Endothelial cell of umbilical vein (primary cell): ENCODE measurements at regions of chr19 and their contacts with region 1.

Region 1: DNA sequence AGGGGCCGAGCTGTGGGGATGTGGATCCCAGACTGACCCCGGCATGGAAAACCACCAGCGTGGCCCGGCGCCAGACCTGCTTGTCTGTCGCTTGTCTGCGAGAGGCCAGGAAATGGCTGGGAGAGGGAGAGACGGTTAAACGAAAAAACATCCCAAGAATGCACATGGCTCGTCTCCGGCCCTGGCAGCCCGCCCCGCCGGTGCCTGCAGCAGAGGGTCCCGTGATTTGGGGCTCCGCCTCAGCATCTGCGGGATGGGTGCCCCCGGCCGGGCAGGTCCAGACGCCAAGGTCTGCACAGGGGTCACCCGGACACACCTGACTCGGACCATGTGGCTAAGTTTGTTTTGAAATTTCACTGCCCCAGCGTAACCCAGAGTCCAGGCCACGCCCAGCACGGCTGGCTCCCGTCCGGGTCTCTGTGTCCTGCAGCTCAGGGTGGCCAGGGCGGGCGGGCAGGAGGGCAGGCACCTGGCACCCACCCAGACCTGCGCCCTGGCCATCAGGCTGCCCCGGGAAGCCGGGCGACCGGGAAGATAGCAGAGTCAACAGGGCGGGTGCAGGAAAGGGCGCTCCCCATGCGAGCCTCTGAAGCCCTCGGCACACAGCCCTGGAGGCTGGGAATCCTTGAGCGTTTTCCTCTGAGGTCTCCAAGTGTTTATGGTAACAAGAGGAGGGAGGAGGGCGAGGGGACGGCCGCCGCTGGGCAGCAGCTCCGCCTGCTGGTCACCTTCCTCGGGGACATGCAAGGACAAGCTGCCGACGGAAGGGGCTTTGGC is 103.2 kb downstream of the GADD45B start:
- DNase-seq: peak; percentile 97
- H3K4me3 ChIP-seq: peak overlapping the region; percentile 23 to 46 (median 26)
- H3K27ac ChIP-seq: peak overlapping the region; percentile 93
- H3K4me1 ChIP-seq: peaks cover 22% of the 10 kb centered on the region
- H3K27me3 ChIP-seq: no peaks in the 10 kb centered on the region
- CTCF ChIP-seq: peak; percentile 93 to 97
- POLR2A ChIP-seq: no peak

Region 2: DNA sequence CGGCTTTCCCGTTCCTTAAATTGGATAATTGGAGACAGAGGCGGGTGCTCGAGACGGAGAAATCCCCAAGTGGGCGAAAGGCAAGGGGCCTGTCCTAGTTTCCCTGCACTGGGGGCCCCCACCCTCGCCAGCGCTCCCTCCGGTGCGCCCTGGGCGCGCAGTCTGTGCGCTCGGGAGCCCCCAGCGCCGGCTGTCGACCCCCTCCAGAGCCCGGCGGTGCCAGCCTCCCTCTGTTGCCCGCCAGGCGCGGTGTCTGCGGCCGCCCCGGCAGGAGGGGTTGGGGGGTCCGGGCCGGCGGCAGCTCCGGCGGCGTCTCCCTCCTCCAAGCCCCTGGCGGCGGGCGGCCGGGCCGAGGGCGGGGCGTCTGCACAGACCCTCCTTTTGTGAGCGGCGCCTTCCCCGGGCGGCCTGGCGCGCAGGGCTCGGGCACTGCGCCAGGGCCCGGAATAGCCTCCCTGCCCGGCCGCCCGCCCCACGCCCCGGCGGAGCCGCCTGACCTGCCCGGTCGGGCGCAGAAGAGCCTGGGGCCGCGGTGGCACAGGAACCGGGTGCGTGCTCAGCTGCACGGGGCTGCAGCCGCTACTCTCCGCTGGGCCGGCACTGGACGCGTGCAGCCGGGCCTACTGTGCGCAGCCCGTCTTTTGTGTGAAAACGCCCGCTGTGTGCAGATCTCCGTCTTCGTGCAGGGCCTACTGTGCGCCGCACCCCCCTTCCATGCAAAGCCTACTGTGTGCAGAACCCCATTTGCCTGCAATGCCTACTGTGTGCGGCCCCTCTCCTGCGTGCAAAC is 90.0 kb before region 1 on chr19:
- CTCF ChIA-PET with region 1: interaction called, 5 read pairs
- POLR2A ChIA-PET with region 1: no interaction called
- dilution Hi-C with region 1: no loop called
- intact Hi-C with region 1: loop called (anchors 1 kb)
- DNase-seq: peak; percentile 34
- H3K4me3 ChIP-seq: peak overlapping the region; percentile 14 to 25 (median 15)
- H3K27ac ChIP-seq: peak overlapping the region; percentile 19
- H3K4me1 ChIP-seq: peaks cover 18% of the 10 kb centered on the region
- H3K27me3 ChIP-seq: no peaks in the 10 kb centered on the region
- CTCF ChIP-seq: no peak
- POLR2A ChIP-seq: no peak

Region 3: DNA sequence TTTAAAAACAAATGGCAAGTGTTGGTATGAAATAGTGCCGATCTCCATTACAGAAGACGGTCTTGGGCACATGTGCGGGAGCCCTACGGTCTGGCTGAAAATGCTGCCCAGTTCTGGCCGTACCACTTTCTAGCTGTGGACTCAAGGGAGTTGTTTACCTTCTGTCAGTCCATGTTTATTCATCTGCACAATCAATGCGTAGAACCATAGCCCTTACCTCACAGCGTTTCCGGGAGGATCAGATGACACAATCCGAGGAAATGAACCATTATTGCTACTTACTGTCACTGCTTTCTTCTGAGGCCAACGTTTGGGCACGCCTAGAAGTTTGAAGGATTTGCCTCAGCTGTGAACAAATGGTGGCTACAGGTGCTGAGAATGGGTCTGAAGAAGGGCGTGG is 72.0 kb before region 1 on chr19:
- CTCF ChIA-PET with region 1: interaction called, 18 read pairs
- POLR2A ChIA-PET with region 1: no interaction called
- dilution Hi-C with region 1: no loop called
- intact Hi-C with region 1: loop called (anchors 1 kb)
- DNase-seq: peak; percentile 93
- H3K4me3 ChIP-seq: no peak overlapping the region
- H3K27ac ChIP-seq: peak overlapping the region; percentile 86
- H3K4me1 ChIP-seq: peaks cover 8% of the 10 kb centered on the region
- H3K27me3 ChIP-seq: no peaks in the 10 kb centered on the region
- CTCF ChIP-seq: no peak
- POLR2A ChIP-seq: peak; percentile 63

Region 4: GRCh38 chr19:2543463-2544442 is 35.3 kb before region 1 on chr19:
- CTCF ChIA-PET with region 1: interaction called, 73 read pairs
- POLR2A ChIA-PET with region 1: interaction called, 9 read pairs
- dilution Hi-C with region 1: no loop called
- intact Hi-C with region 1: loop called (anchors 1 kb)
- DNase-seq: peak; percentile 97
- H3K4me3 ChIP-seq: peak overlapping the region in 1 of 3 experiments; percentile 20
- H3K27ac ChIP-seq: peak overlapping the region; percentile 99
- H3K4me1 ChIP-seq: peaks cover 58% of the 10 kb centered on the region
- H3K27me3 ChIP-seq: no peaks in the 10 kb centered on the region
- CTCF ChIP-seq: peak; percentile 22 to 46
- POLR2A ChIP-seq: peak; percentile 55

Region 5: DNA sequence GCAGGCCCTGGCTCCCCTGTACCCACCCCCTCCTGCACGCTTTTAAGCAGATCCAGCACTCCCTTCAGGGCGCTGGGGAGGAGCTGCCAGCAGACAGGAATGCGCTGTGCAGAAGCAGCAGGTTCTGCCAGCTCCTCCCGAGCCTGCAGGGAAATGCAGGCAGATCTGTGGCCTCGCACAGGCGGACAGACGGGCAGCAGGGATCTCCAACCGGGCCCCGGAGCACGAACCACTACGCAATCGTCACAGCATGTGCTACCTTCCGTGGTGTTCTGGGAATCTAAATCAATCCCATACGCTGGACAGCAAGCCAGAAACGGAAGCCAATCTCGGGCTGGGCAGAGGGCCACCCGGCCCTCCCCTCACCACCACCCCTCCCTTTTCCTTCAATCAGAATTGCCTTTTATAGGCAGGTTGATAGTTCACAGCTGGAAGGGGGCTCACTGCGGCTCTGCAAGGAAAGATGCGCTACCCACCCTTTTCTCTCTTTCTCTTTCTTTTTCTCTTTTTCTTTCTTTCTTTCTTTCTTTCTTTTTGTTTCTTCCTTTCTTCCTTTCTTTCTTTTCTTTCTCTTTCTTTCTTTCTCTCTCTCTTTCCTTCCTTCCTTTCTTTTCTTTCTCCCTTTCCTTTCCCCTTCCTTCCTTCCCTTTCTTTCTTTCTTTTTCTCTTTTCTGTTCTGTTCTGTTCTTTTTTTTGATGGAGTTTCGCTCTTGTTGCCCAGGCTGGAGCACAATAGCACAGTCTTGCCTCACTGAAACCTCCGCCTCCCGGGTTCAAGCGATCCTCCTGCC is 23.5 kb after region 1 on chr19:
- CTCF ChIA-PET with region 1: interaction called, 15 read pairs
- POLR2A ChIA-PET with region 1: interaction called, 4 read pairs
- dilution Hi-C with region 1: no loop called
- intact Hi-C with region 1: no loop called
- DNase-seq: peak; percentile 37
- H3K4me3 ChIP-seq: no peak overlapping the region
- H3K27ac ChIP-seq: no peak overlapping the region
- H3K4me1 ChIP-seq: peaks cover 15% of the 10 kb centered on the region
- H3K27me3 ChIP-seq: no peaks in the 10 kb centered on the region
- CTCF ChIP-seq: no peak
- POLR2A ChIP-seq: no peak

Region 6: DNA sequence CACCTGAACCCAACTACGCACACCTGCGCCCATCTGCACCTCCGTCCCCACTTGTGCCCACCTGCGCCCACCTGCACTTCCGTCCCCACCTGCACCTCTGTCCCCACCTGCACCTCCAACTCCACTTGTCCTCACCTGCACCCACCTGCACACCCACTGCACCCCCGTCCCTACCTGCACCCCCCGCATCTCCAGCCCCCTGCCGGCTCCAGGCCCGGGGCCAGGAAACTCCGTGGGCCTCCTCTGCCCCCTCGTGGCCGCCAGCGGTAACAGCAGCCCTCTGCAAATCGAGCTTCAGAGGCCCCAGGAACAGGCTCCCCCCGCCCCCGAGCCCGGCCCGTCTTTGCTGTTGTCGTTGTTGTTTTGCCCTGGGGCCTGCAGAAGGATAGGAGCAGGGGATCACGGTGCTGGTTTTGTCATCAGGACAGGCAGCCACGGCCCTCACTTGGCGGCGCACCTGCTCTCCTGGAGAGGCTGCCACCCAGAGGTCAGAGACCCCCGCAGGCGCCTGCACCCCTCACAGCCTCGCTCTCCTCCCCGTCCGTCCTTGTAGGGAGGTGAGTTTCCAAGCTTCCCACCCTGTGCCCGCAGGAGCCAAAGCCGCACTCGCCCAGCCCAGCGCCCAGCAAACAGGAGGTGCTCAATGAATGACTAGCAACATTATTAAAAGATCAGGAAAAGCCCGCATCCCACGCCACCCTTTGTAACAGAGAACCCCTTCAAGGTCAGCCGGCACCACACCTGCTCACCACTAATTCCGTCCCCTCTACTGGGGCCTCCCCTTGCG is 58.0 kb after region 1 on chr19:
- CTCF ChIA-PET with region 1: interaction called, 10 read pairs
- POLR2A ChIA-PET with region 1: interaction called, 3 read pairs
- dilution Hi-C with region 1: no loop called
- intact Hi-C with region 1: no loop called
- DNase-seq: peak; percentile 43
- H3K4me3 ChIP-seq: no peak overlapping the region
- H3K27ac ChIP-seq: no peak overlapping the region
- H3K4me1 ChIP-seq: no peaks in the 10 kb centered on the region
- H3K27me3 ChIP-seq: no peaks in the 10 kb centered on the region
- CTCF ChIP-seq: peak; percentile 75 to 93
- POLR2A ChIP-seq: no peak